ENCODE measurements at regions of chr17 and their contacts with region 1.

Region 1: DNA sequence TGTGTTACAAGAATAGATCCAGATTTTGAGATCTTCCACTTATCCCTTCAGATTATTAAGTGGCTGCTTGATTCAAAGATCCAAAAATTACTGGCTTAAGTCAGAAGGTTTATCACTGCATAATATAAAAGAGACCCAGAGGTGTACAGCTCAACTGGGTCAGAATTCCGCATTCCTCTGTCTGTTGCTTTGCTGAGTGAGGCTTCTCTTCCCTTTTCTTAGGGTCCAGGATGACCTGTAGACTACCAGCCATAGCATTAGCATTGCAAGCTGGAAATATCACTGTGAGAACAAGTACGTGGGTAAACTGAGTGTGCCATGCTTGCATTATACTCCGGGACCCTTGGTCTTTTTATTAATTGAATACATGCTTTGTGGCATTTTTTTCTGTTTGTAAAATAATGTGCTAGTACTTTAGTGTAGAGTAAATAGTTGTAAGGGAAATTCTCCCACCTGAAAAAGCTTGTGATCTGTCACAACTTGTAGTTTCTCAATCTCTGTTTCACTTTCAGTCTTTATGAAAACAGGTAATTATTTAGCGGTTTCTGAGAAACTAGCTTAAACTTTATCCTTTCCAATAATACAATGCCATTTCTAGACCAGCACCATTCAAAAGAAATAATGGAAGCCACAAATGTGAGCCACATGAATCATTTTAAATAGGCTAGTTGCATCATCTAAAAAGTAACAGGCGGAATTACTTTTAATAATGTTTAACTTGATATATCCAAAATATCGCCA is 61.6 kb downstream of the TNRC6C start:
- DNase-seq: no peak

Region 2: DNA sequence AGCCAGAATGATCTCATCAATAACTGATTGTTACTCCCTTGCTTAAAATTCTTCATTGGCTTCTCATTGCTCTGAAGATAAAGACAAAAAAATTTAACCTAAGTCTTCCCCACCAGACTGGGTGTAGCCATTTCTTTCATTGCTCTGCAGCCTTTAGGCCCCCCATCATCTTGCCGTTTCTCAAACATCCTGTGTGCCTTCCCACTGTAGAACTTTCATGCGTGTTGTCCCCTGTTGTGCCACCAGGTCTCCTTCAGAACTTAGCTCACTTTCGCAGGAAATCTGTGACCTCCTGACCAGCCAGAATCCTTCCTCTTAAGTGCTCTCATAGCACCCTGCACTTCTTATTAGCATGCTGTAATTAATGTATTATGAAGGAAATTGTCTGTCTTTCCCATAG is 29.8 kb before region 1 on chr17:
- intact Hi-C with region 1: no loop called
- DNase-seq: no peak

Region 3: GRCh38 chr17:78089576-78090281 is 69.6 kb after region 1 on chr17:
- intact Hi-C with region 1: loop called (anchors 5 kb)
- DNase-seq: no peak

Measured in cardiac septum (tissue), 1 donor.